Adrenal gland (tissue), 19 donors: ENCODE measurements at regions of chr5 and their contacts with region 1.

Region 1: GRCh38 chr5:129746876-129747275 is 1.0 kb upstream of the MINAR2 start:
- DNase-seq: no peak
- H3K4me3 ChIP-seq: no peak overlapping the region
- H3K27ac ChIP-seq: no peak overlapping the region
- H3K4me1 ChIP-seq: peaks cover 0 to 6% of the 10 kb centered on the region in 2 donors
- H3K27me3 ChIP-seq: no peaks in the 10 kb centered on the region
- CTCF ChIP-seq: no peak
- POLR2A ChIP-seq: no peak

Region 2: GRCh38 chr5:129563585-129563984 is 183.3 kb before region 1 on chr5:
- intact Hi-C with region 1: no loop called
- DNase-seq: no peak
- H3K4me3 ChIP-seq: no peak overlapping the region
- H3K27ac ChIP-seq: no peak overlapping the region
- H3K4me1 ChIP-seq: no peaks in the 10 kb centered on the region
- H3K27me3 ChIP-seq: no peaks in the 10 kb centered on the region
- CTCF ChIP-seq: no peak
- POLR2A ChIP-seq: no peak

Region 3: GRCh38 chr5:129718471-129719090 is 28.3 kb before region 1 on chr5:
- intact Hi-C with region 1: loop called in 1 of 2 experiments (anchors 2 kb)
- DNase-seq: no peak
- H3K4me3 ChIP-seq: no peak overlapping the region
- H3K27ac ChIP-seq: no peak overlapping the region
- H3K4me1 ChIP-seq: no peaks in the 10 kb centered on the region
- H3K27me3 ChIP-seq: no peaks in the 10 kb centered on the region
- CTCF ChIP-seq: no peak
- POLR2A ChIP-seq: no peak

Region 4: DNA sequence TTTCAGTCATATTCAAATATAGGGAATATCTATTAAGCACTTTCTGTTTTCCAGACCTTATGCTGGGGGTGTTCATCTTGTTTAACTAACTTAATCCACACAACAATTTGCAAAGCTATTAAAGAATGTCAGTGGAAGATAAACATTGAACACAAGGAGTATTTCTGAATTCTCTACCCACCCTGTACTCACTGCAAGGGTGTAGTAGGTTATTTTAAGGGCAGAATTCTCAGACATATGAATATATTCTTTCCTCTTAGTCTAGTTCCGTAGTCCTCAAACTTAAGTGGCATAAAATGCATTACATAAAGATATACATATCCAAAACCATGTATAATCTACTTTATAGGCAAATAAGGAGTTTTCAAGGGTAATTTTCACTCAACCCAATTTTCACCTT is 137.4 kb after region 1 on chr5:
- intact Hi-C with region 1: no loop called
- DNase-seq: no peak
- H3K4me3 ChIP-seq: no peak overlapping the region
- H3K27ac ChIP-seq: no peak overlapping the region
- H3K4me1 ChIP-seq: no peaks in the 10 kb centered on the region
- H3K27me3 ChIP-seq: no peaks in the 10 kb centered on the region
- CTCF ChIP-seq: no peak
- POLR2A ChIP-seq: no peak